OCI-LY7 (cell line): ENCODE measurements at regions of chr1 and their contacts with region 1.

Region 1: GRCh38 chr1:205523891-205524793 is 19.7 kb downstream of the CDK18 start:
- DNase-seq: peak; percentile 79
- H3K4me3 ChIP-seq: no peak overlapping the region
- H3K27ac ChIP-seq: no peak overlapping the region
- H3K4me1 ChIP-seq: no peaks in the 10 kb centered on the region
- CTCF ChIP-seq: peak; percentile 90

Region 2: GRCh38 chr1:205335643-205336091 is 188.5 kb before region 1 on chr1:
- CTCF ChIA-PET with region 1: interaction called, 4 read pairs
- POLR2A ChIA-PET with region 1: no interaction called
- intact Hi-C with region 1: loop called (anchors 1 kb)
- DNase-seq: peak; percentile 82
- H3K4me3 ChIP-seq: no peak overlapping the region
- H3K27ac ChIP-seq: no peak overlapping the region
- H3K4me1 ChIP-seq: no peaks in the 10 kb centered on the region
- CTCF ChIP-seq: peak; percentile 100

Region 3: DNA sequence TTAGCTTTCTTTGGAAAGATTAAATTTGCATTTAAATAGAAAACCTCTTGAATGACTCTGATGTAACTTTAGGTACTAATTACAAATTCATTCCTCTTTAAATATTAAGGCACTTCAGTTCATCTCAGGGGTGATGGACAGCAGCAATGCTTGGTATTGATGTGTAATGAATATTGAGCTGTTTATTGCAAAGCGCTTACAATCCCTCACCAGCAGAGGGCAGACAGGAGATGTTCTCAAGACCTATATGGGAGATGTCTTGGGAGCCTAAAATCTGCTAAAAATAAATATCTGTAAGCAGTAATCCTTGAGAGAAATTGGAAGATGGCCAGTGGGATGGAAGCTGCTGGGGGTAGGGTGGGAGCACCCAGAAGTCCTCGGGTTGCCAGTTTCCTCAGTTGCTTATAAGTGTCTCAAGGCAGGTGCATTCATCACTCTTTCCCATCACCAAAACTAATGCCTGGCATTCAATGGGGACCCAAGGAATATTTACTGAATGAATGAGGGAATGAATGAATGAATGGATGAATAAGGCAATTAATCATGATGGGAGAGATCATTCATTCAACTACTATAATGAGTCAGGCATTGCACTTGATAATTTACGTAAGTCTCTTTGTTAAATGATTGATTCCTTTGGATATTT is 169.8 kb before region 1 on chr1:
- CTCF ChIA-PET with region 1: no interaction called
- POLR2A ChIA-PET with region 1: no interaction called
- intact Hi-C with region 1: loop called (anchors 2 kb)
- DNase-seq: peak; percentile 78
- H3K4me3 ChIP-seq: no peak overlapping the region
- H3K27ac ChIP-seq: no peak overlapping the region
- H3K4me1 ChIP-seq: peaks cover 9% of the 10 kb centered on the region
- CTCF ChIP-seq: peak; percentile 96

Region 4: DNA sequence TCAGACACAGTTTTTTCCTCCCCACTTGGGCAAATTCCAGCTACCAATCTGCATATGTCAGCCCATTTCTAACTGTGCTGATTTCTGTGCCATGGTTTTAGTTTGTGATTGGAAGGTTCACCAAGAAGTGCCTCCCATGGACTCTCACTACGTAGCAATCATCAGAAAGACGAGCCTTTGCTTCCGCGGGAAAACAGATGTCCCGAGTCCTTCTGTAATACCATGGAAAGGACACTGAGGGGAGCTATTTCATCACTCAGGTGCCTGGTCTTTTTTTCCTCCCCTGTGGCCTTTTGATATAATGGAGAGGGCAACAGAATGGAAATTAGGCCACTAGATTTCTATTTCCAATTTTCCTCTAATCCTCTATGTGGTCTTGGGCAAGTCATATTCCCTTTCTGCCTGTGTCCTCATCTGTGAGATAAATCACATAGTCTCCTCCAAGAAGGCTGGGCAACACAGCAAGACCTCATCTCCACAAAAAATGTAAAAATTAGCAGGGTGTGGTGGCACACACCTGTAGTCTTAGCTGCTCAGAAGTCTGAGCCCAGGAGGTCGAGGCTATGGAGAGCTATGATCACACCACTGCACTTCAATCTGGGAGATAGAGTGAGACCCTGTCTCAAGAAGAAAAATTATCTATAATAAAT is 127.0 kb before region 1 on chr1:
- CTCF ChIA-PET with region 1: no interaction called
- POLR2A ChIA-PET with region 1: interaction called, 3 read pairs
- intact Hi-C with region 1: loop called (anchors 1 kb)
- DNase-seq: peak; percentile 79
- H3K4me3 ChIP-seq: no peak overlapping the region
- H3K27ac ChIP-seq: no peak overlapping the region
- H3K4me1 ChIP-seq: peaks cover 13% of the 10 kb centered on the region
- CTCF ChIP-seq: peak; percentile 94